K562 (cell line): ENCODE measurements at regions of chr10 and their contacts with region 1.

Region 1: DNA sequence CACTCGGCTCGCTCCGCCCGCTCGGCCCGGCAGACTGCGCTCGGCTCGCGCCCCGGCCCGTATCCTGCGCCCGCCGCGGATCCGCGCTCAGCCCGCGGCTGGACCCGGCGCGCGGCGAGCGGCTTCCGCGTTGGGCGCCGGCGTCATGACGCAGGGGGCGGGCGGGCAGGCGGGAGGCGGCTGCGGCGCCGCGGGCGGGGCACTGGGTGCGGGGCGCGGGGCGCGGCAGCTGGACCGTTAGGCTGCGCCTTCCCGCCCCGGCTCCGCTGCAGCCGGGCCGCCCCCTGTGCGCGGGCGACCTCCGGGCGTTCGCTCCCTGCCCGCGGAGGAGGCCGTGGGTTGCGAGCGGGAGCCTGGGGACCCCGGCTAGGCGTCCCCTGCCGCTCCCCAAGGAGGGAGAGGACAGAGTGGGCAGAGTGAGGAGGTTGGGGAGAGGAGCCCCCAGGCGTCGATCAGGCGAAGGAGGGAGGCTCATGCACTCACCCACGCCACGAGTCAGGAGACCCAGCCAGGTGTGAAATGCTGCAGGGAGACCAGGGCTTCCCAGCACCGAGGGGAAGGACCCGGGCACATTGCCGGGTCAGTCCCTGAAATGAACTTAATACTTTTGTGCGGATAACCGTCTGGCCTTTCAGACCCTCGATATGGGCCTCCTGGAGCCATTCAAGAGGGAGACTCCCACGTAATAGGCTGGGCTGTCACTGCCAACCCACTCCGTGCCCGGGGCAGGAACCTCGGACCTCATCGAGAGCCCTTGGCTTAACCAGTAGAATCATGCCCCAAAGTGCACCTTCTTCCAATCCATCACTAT is at the start of gene PIP4K2A:
- DNase-seq: peak; percentile 86 to 91 (median 88)
- ATAC-seq: peak; percentile 72
- H3K4me3 ChIP-seq: peak within 1 kb of the TSS; percentile 85
- H3K27ac ChIP-seq: peak within 1 kb of the TSS; percentile 93
- H3K4me1 ChIP-seq: peaks cover 19 to 23% of the 10 kb centered on the region in 2 experiments; a peak in 4 of 5 replicates
- H3K27me3 ChIP-seq: no peaks in the 10 kb centered on the region
- CTCF ChIP-seq: no peak
- EP300 ChIP-seq: no peak
- POLR2A ChIP-seq: no peak; the same call in 1 of the 2 replicates
- RAD21 ChIP-seq: 0 out of 4 replicates have a peak, but pooled peaks of 1 of the 2 experiments have one; percentile 13
- polyA plus RNA-seq, gene PIP4K2A: 64.8 to 87.2 TPM

Region 2: DNA sequence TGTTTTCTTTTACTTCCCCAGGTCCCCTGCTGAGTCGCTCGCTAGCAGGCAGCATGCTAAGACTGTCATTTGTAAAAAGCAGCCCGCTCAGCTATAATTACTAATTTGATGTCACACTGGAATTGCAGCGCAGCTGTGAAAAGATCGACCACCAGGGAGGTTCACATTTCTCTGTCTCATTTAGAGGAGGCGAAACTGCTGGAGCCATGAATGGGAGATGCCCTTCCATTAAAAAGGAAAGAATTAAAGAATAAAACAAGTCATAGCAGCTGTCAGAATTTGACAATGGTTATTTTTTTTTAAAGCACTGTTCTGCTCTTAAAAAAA is 153.8 kb before region 1 on chr10:
- CTCF ChIA-PET with region 1: no interaction called
- POLR2A ChIA-PET with region 1: no interaction called
- in situ Hi-C with region 1: no loop called
- intact Hi-C with region 1: no loop called
- DNase-seq: no peak
- ATAC-seq: no peak
- H3K4me3 ChIP-seq: no peak overlapping the region
- H3K27ac ChIP-seq: no peak overlapping the region
- H3K4me1 ChIP-seq: no peaks in the 10 kb centered on the region
- H3K27me3 ChIP-seq: no peaks in the 10 kb centered on the region
- CTCF ChIP-seq: no peak
- EP300 ChIP-seq: no peak
- POLR2A ChIP-seq: no peak
- RAD21 ChIP-seq: no peak

Region 3: DNA sequence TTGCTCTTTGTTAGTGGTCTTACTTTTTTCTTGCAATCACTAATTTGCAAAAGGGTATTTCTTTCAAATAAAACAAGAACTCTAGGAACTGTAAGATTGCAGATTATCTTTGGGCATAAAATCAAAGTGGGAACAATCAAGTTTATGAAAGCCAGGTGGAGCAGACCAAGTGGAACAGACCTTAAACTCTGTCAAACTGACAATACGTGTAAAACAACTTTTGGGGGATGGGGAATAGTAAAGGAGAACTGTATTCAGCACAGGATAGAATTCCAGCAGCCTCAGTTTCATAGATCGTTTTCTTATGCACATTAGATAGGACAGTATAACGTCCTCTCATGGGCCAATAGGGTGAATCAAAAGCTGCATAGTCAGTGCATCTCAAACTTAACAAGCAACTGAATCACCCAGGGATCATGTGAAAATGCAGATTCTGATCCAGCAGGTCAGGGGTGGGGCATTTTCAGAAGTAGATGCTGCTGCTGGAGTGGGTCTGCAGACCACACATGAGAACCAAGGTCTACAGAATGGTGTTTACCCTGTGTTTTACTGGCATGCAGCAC is 121.0 kb before region 1 on chr10:
- CTCF ChIA-PET with region 1: no interaction called
- POLR2A ChIA-PET with region 1: no interaction called
- in situ Hi-C with region 1: no loop called
- intact Hi-C with region 1: no loop called
- DNase-seq: no peak
- ATAC-seq: no peak
- H3K4me3 ChIP-seq: no peak overlapping the region
- H3K27ac ChIP-seq: no peak overlapping the region
- H3K4me1 ChIP-seq: peaks cover 0 to 17% of the 10 kb centered on the region in 2 experiments; a peak in 3 of 5 replicates
- H3K27me3 ChIP-seq: no peaks in the 10 kb centered on the region
- CTCF ChIP-seq: no peak
- EP300 ChIP-seq: no peak
- POLR2A ChIP-seq: no peak
- RAD21 ChIP-seq: no peak

Region 4: GRCh38 chr10:22666287-22667092 is 48.2 kb before region 1 on chr10:
- CTCF ChIA-PET with region 1: no interaction called
- POLR2A ChIA-PET with region 1: interaction called, 3 read pairs
- in situ Hi-C with region 1: no loop called
- intact Hi-C with region 1: loop called (anchors 2 kb)
- DNase-seq: peak in 3 of 4 experiments; percentile 25 to 86 (median 72)
- ATAC-seq: peak; percentile 85
- H3K4me3 ChIP-seq: peak overlapping the region; percentile 7; the same call in 1 of the 2 replicates
- H3K27ac ChIP-seq: peak overlapping the region; percentile 78; the same call in 2 of the 3 replicates
- H3K4me1 ChIP-seq: peaks cover 23 to 55% of the 10 kb centered on the region in 2 experiments
- H3K27me3 ChIP-seq: no peaks in the 10 kb centered on the region
- CTCF ChIP-seq: no peak
- EP300 ChIP-seq: peak; percentile 69; the same call in 1 of the 2 replicates
- POLR2A ChIP-seq: no peak
- RAD21 ChIP-seq: peak in 1 of 2 experiments; percentile 25; a peak in 1 of 4 replicates

Region 5: GRCh38 chr10:22704471-22704911 is 10.2 kb before region 1 on chr10:
- CTCF ChIA-PET with region 1: no interaction called
- POLR2A ChIA-PET with region 1: interaction called, 17 read pairs
- in situ Hi-C with region 1: no loop called
- intact Hi-C with region 1: no loop called
- DNase-seq: no peak
- ATAC-seq: 0 out of 3 replicates have a peak, but pooled peaks have one; percentile 9
- H3K4me3 ChIP-seq: no peak overlapping the region
- H3K27ac ChIP-seq: peak overlapping the region; percentile 41; the same call in 2 of the 3 replicates
- H3K4me1 ChIP-seq: peaks cover 19 to 61% of the 10 kb centered on the region in 2 experiments
- H3K27me3 ChIP-seq: no peaks in the 10 kb centered on the region
- CTCF ChIP-seq: no peak
- EP300 ChIP-seq: no peak
- POLR2A ChIP-seq: no peak
- RAD21 ChIP-seq: no peak

Region 6: GRCh38 chr10:22740207-22740606 is 25.5 kb after region 1 on chr10:
- CTCF ChIA-PET with region 1: no interaction called
- POLR2A ChIA-PET with region 1: no interaction called
- in situ Hi-C with region 1: no loop called
- intact Hi-C with region 1: no loop called
- DNase-seq: no peak
- ATAC-seq: no peak
- H3K4me3 ChIP-seq: no peak overlapping the region
- H3K27ac ChIP-seq: no peak overlapping the region
- H3K4me1 ChIP-seq: peaks cover 0 to 26% of the 10 kb centered on the region in 2 experiments
- H3K27me3 ChIP-seq: no peaks in the 10 kb centered on the region
- CTCF ChIP-seq: no peak
- EP300 ChIP-seq: no peak
- POLR2A ChIP-seq: no peak
- RAD21 ChIP-seq: peak in 1 of 2 experiments; percentile 7; a peak in 1 of 4 replicates

Region 7: DNA sequence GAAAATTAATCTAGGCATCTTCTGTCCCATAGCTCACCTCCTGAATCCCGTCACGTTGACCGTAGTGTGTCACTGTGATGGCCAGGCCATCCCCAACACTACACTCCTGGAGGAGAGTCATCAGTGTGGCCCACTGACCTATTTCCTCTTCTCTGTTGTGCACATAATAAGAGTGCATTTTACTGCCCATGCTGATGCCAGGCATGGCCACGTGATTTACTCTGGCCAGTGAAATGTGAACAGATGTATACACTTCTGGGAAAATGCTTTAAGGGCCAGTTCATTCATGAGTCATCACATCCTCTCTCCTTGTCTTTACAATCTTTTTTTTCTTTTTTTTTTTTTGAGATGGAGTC is 101.6 kb after region 1 on chr10:
- CTCF ChIA-PET with region 1: no interaction called
- POLR2A ChIA-PET with region 1: no interaction called
- in situ Hi-C with region 1: no loop called
- intact Hi-C with region 1: loop called (anchors 5 kb)
- DNase-seq: peak in 2 of 4 experiments; percentile 31 to 50
- ATAC-seq: peak; percentile 63
- H3K4me3 ChIP-seq: no peak overlapping the region
- H3K27ac ChIP-seq: peak overlapping the region; percentile 74; the same call in 2 of the 3 replicates
- H3K4me1 ChIP-seq: peaks cover 8 to 11% of the 10 kb centered on the region in 2 experiments; a peak in 4 of 5 replicates
- H3K27me3 ChIP-seq: no peaks in the 10 kb centered on the region; a peak in 1 of 5 replicates
- CTCF ChIP-seq: no peak
- EP300 ChIP-seq: peak; percentile 29
- POLR2A ChIP-seq: no peak
- RAD21 ChIP-seq: no peak

Region 8: GRCh38 chr10:22854935-22855421 is 140.3 kb after region 1 on chr10:
- CTCF ChIA-PET with region 1: no interaction called
- POLR2A ChIA-PET with region 1: interaction called, 3 read pairs
- in situ Hi-C with region 1: no loop called
- intact Hi-C with region 1: loop called (anchors 10 kb)
- DNase-seq: peak in 2 of 4 experiments; percentile 61 to 65
- ATAC-seq: peak; percentile 93
- H3K4me3 ChIP-seq: no peak overlapping the region
- H3K27ac ChIP-seq: no peak overlapping the region
- H3K4me1 ChIP-seq: peaks cover 0 to 25% of the 10 kb centered on the region in 2 experiments; a peak in 3 of 5 replicates
- H3K27me3 ChIP-seq: no peaks in the 10 kb centered on the region
- CTCF ChIP-seq: peak; percentile 34 to 73 (median 43); a peak in 4 of 6 replicates
- EP300 ChIP-seq: peak; percentile 29
- POLR2A ChIP-seq: no peak
- RAD21 ChIP-seq: peak; percentile 85 to 88